ENCODE measurements at regions of chr16 and their contacts with region 1.

Region 1: GRCh38 chr16:87492721-87493607 is at the start of gene ZCCHC14:
- DNase-seq: peak; percentile 99 to 100 (median 99)
- H3K4me3 ChIP-seq: peak within 1 kb of the TSS; percentile 55
- H3K27ac ChIP-seq: peak within 1 kb of the TSS in 1 of 2 donors; percentile 49
- H3K4me1 ChIP-seq: peaks cover 10% of the 10 kb centered on the region
- H3K27me3 ChIP-seq: no peaks in the 10 kb centered on the region
- CTCF ChIP-seq: no peak
- EP300 ChIP-seq: no peak
- POLR2A ChIP-seq: peak; percentile 69
- total RNA-seq, gene ZCCHC14: 16.1 to 37.6 (median 32.2) TPM

Region 2: DNA sequence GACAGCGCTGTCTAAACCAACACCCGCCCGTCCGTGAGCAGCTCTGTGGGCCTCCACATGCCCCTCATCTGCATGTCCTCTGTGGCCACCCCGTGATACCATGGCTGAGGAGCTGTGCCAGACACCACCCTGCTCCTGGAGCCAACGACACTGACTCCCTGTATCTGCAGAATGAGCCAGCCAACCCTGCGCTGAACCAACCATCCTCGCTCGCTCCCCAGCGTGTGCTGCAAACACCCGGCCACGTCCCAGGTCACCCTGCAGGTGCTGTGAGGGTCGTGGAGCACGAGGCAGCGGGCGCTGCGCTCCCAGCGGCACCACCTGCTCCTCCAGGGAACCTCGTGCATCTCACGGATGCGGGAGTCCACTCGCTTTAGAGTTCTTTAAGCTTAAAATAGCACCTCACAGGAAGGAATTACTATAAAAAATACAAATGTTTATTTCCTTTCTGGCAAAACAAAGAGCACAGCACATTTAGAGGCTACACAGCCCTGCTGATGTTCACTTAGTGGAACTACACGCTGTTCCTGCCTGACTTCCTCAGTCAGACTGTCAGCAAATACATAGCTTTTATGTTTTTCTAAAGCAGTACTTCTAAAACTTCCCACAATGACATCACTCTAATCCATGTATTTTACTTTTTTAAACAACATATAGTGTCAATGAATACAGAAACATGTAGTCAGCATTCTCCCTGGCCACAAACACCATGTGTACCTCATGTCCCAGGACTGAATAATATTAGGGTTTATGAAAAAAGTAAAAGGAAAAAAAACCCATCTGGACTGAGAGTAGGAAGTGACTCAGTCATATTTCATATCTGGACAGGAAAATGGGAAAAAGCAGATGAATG is 57.4 kb before region 1 on chr16:
- intact Hi-C with region 1: loop called in 1 of 4 experiments (anchors 10 kb)
- DNase-seq: peak in 2 of 5 donors; percentile 34 to 48
- H3K4me3 ChIP-seq: no peak overlapping the region
- H3K27ac ChIP-seq: peak overlapping the region; percentile 14 to 39
- H3K4me1 ChIP-seq: peaks cover 8% of the 10 kb centered on the region
- H3K27me3 ChIP-seq: no peaks in the 10 kb centered on the region
- CTCF ChIP-seq: no peak
- EP300 ChIP-seq: no peak
- POLR2A ChIP-seq: no peak

Region 3: GRCh38 chr16:87540945-87541877 is 48.2 kb after region 1 on chr16:
- intact Hi-C with region 1: loop called in 1 of 4 experiments (anchors 5 kb)
- DNase-seq: peak; percentile 35 to 69 (median 62)
- H3K4me3 ChIP-seq: no peak overlapping the region
- H3K27ac ChIP-seq: peak overlapping the region in 1 of 2 donors; percentile 28
- H3K4me1 ChIP-seq: peaks cover 8% of the 10 kb centered on the region
- H3K27me3 ChIP-seq: no peaks in the 10 kb centered on the region
- CTCF ChIP-seq: no peak
- EP300 ChIP-seq: no peak
- POLR2A ChIP-seq: no peak

Region 4: DNA sequence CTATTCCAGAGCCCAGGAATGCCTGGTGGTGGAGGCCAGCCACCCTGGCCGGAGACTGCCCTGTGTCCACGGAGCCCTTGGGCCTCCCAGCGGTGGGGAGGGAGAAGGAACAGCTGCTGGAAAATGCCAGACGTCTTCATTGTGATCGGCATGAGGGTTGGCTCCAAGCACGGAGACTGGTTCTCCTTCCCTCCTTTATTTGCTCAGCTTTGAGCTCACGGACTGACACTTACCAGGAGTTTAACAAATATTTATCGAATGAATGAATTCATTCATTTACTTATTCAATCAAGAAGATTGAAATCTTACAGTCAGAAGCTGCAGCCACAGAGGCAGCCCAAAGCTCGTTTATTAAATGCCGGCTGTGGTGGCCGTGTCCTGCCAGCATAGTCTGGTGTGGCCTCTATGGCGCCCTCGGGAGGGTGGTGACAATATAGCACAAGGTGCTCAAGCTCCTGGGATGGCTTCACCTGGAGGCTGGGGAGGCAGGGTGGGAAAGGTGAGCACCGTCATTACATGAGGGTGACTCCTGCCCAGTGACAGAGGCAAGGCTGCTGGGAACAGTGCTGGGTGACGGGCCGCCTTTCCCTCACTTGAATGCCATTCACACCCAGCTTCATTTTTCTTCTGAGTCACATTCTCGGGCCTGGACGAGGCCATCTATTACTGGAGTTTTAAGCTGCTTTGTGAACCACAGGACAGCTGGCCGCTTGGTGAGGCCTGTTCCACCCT is 78.3 kb after region 1 on chr16:
- intact Hi-C with region 1: no loop called
- DNase-seq: peak; percentile 44 to 68 (median 51)
- H3K4me3 ChIP-seq: no peak overlapping the region
- H3K27ac ChIP-seq: no peak overlapping the region
- H3K4me1 ChIP-seq: peaks cover 9% of the 10 kb centered on the region
- H3K27me3 ChIP-seq: no peaks in the 10 kb centered on the region
- CTCF ChIP-seq: peak in 2 of 3 donors; percentile 38 to 39
- EP300 ChIP-seq: no peak
- POLR2A ChIP-seq: no peak

Region 5: DNA sequence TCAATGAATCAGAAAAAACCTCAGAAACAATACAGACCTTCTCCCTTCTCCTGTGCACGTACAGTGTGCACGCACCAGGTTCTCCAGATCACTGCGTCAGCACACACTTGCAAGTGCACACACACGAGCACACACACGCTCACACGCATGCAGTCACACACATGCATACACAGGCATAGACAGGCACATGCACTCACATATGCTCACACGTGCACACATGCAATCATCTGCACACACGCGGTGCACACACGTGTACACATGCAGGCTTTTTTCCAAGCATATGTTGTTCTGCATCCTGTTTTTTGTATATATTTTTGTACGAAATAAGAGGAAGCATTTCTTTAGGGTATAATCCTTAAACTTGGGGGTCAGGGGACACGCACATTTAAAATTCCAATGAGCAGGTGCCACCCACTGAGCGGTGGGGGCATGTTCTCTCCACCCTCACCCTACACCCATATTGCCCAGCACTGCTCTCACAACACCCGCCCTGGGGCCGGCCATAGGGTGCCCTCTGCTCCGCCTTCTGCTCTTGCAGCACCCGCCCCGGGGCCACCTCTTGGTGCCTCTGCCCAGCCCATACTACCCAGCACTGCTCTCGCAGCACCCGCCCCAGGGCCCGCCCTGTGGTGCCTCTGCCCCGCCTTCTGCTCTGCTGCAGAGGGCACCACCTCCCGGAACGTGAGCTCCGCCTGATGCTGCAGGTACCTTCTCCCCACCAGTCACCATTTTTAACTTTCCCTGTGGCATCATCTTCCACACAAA is 252.0 kb after region 1 on chr16:
- intact Hi-C with region 1: no loop called
- DNase-seq: no peak
- H3K4me3 ChIP-seq: no peak overlapping the region
- H3K27ac ChIP-seq: no peak overlapping the region
- H3K4me1 ChIP-seq: peaks cover 5% of the 10 kb centered on the region
- H3K27me3 ChIP-seq: no peaks in the 10 kb centered on the region
- CTCF ChIP-seq: no peak
- EP300 ChIP-seq: no peak
- POLR2A ChIP-seq: no peak

Measured in ovary (tissue), 10 donors.